ENCODE measurements at regions of chr22 and their contacts with region 1.

Region 1: GRCh38 chr22:23192181-23192957 is 12.1 kb downstream of the BCR start:
- DNase-seq: no peak
- H3K4me3 ChIP-seq: no peak overlapping the region
- H3K27ac ChIP-seq: no peak overlapping the region
- H3K4me1 ChIP-seq: peaks cover 0 to 78% (median 29%) of the 10 kb centered on the region in 4 donors
- H3K27me3 ChIP-seq: no peaks in the 10 kb centered on the region
- CTCF ChIP-seq: no peak

Region 2: GRCh38 chr22:23240639-23241389 is 48.4 kb after region 1 on chr22:
- intact Hi-C with region 1: loop called (anchors 10 kb)
- DNase-seq: no peak
- H3K4me3 ChIP-seq: no peak overlapping the region
- H3K27ac ChIP-seq: no peak overlapping the region
- H3K4me1 ChIP-seq: peaks cover 0 to 90% (median 54%) of the 10 kb centered on the region in 4 donors
- H3K27me3 ChIP-seq: no peaks in the 10 kb centered on the region
- CTCF ChIP-seq: peak in 1 of 2 experiments; percentile 17

Region 3: GRCh38 chr22:23263651-23264555 is 71.5 kb after region 1 on chr22:
- intact Hi-C with region 1: no loop called
- DNase-seq: no peak
- H3K4me3 ChIP-seq: no peak overlapping the region
- H3K27ac ChIP-seq: peak overlapping the region; percentile 39 to 58
- H3K4me1 ChIP-seq: peaks cover 0 to 25% (median 10%) of the 10 kb centered on the region in 4 donors
- H3K27me3 ChIP-seq: no peaks in the 10 kb centered on the region
- CTCF ChIP-seq: no peak

Measured in tibial artery (tissue), 4 donors.